Left cardiac atrium (tissue), 4 donors: ENCODE measurements at regions of chr3 and their contacts with region 1.

Region 1: DNA sequence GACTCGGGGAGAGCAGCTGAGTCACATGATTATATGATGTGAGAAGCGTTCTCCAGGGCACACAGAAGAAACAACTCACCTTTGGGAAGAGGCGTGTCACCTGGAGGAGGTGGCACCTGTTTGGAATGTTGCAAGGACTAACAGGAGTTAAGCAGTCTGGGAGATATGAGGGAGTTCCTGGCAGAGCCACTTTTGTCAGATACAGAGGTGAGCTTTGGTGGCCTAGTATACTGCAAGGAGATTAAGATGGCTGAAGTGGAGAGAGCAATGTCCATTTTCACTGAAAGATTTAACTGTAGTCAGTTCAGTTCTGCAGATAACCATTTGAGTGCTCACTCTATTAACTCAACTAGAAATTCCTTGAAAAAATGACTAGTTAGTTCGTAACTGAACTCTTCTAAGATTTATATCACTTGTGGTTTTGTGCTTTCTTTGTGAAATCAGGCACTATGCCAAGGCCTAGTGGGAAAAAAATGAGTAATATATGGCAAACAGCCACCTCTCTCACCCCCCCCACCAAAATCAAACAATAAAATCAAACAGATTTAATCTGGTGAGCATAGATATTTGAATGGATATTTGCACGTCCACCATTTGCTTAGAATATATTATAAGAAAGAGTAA is 61.3 kb downstream of the CRYBG3 start:
- DNase-seq: no peak
- ATAC-seq: no peak

Region 2: DNA sequence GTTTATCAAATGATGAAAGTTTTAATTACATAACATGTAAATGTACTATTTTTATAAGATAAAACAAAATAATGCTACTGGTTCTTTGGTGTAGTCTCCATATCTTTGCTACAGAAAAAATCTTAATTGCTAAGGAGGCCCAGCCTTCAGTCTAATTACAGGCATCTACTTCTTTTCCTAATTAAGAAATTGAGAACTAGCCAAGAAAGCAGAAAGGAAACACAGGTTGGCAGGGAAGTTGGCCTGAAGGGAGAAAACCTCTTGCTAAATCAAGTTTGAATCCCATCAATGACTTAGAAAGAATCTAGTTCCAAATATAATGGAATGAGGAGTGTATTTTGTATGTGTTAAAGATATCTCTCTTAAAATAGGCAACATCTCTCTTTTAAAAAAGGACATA is 330.9 kb before region 1 on chr3:
- intact Hi-C with region 1: no loop called
- DNase-seq: no peak
- ATAC-seq: no peak

Region 3: DNA sequence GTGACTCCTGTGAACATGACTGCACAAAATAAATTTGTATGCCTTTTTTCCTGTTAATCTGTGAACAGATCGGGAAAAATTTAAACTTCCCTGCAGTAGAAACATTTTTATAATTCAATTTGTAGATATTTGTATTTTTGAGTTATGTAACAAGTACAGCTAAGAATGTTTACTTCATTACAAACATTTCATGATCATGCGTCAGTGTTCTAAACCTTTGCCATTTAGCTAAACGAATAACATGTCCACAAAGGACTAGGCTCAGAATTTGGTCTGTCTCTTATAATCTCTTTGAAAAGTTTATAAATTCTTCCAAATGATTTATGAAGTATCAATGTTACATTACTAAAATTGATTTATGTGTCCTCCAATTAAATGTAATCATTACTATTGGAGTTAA is 78.6 kb before region 1 on chr3:
- intact Hi-C with region 1: no loop called
- DNase-seq: no peak
- ATAC-seq: no peak

Region 4: DNA sequence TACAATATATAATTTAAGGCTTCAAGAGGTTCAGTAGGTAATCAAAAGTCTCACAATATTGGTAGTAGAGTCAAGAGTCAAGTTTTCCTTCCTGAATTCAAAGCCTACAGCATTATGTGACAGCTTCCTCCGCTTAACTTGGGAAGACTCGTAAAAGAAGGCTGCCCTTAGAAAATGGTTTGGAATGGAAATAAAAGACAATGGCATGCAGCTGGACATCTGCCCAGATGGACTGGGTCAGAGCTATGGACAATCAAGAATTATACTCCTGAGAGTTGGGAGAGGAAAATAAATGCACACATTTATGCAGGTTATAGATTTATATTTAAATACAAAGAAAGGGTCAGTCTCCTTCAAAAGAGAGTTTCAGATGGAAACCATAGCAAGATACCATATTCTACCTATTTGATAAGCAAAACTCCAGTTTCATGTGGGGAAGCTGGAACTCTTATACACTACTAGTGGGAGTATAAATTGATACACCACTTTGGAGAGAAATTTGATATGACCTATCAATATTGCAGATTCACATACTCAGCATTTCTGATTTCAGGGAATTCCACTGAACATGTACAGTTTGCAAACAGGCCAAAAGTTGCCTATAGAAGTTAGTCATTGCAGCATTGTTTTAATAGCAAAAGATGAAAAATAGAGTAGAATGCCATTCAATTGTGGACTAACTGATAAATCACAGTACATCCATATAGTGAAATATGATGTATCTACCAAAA is 55.2 kb before region 1 on chr3:
- intact Hi-C with region 1: loop called in 1 of 2 experiments (anchors 5 kb)
- DNase-seq: no peak
- ATAC-seq: no peak